Ovary (tissue), 10 donors: ENCODE measurements at regions of chr17 and their contacts with region 1.

Region 1: GRCh38 chr17:16215273-16215964 is at the start of gene NCOR1:
- DNase-seq: peak; percentile 91 to 95 (median 92)
- H3K4me3 ChIP-seq: peak within 1 kb of the TSS; percentile 85
- H3K27ac ChIP-seq: peak within 1 kb of the TSS; percentile 92 to 98
- H3K4me1 ChIP-seq: peaks cover 8% of the 10 kb centered on the region
- H3K27me3 ChIP-seq: no peaks in the 10 kb centered on the region
- CTCF ChIP-seq: peak in 2 of 3 donors; percentile 23 to 24
- EP300 ChIP-seq: no peak
- POLR2A ChIP-seq: peak; percentile 70
- total RNA-seq, gene NCOR1: 93.6 to 142 (median 117) TPM

Region 2: GRCh38 chr17:15999439-16000350 is 215.7 kb before region 1 on chr17 and contains the starts of genes TTC19 and ZSWIM7:
- intact Hi-C with region 1: loop called in 1 of 4 experiments (anchors 10 kb)
- DNase-seq: peak; percentile 95 to 97 (median 96)
- H3K4me3 ChIP-seq: peak within 1 kb of the TSS; percentile 68
- H3K27ac ChIP-seq: peak within 1 kb of the TSS; percentile 94 to 98
- H3K4me1 ChIP-seq: peaks cover 10% of the 10 kb centered on the region
- H3K27me3 ChIP-seq: no peaks in the 10 kb centered on the region
- CTCF ChIP-seq: peak in 2 of 3 donors; percentile 7 to 21
- EP300 ChIP-seq: no peak
- POLR2A ChIP-seq: peak; percentile 92
- total RNA-seq, gene TTC19: 28.4 to 80.0 (median 34.3) TPM
- total RNA-seq, gene ZSWIM7: 14.4 to 36.2 (median 23.4) TPM

Region 3: GRCh38 chr17:16269658-16270057 is 54.2 kb after region 1 on chr17:
- intact Hi-C with region 1: no loop called
- DNase-seq: no peak
- H3K4me3 ChIP-seq: no peak overlapping the region
- H3K27ac ChIP-seq: no peak overlapping the region
- H3K4me1 ChIP-seq: no peaks in the 10 kb centered on the region
- H3K27me3 ChIP-seq: no peaks in the 10 kb centered on the region
- CTCF ChIP-seq: no peak
- EP300 ChIP-seq: no peak
- POLR2A ChIP-seq: no peak

Region 4: DNA sequence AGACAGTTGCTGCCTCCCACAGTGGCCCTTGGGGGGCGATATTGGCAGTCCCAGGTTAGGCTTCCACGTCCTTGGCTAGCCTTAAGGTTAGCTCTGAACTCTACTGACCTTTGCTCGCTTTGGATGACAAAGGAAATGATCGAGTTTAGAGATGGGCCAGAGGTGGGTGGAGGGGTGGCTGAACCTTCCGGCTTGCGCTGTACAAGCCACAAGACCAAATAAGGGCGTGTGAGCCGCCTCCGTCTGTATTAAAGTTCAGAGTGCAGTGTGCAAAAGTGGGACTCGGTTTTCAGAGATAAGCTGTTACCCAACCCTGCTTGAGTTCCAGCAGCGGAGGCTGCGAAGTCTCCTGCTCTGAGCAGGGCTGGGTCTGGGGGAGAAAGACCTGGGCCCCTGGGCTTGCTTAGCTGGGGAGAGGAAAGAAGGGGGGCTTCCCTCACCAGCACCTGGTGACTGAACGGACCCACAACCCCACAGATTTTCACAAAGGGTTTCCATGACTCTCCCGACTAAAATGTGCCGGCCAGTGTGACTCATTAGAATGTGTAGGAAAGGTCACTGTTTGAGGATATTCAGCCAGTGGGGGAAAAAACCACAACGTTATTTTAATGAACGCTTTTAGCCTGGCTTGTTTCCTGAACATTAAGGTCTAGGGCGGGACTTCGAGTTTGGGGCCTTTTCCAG is 70.7 kb after region 1 on chr17:
- intact Hi-C with region 1: loop called in 2 of 4 experiments (anchors 1 to 5 kb)
- DNase-seq: peak; percentile 80 to 86 (median 86)
- H3K4me3 ChIP-seq: peak overlapping the region; percentile 21
- H3K27ac ChIP-seq: peak overlapping the region; percentile 82 to 93
- H3K4me1 ChIP-seq: peaks cover 16% of the 10 kb centered on the region
- H3K27me3 ChIP-seq: no peaks in the 10 kb centered on the region
- CTCF ChIP-seq: peak in 2 of 3 donors; percentile 26 to 47
- EP300 ChIP-seq: peak; percentile 23
- POLR2A ChIP-seq: peak; percentile 49